ENCODE measurements at regions of chr16 and their contacts with region 1.

Region 1: GRCh38 chr16:28617874-28618273 is 8.0 kb upstream of the SULT1A1 start:
- DNase-seq: no peak
- ATAC-seq: no peak
- H3K4me3 ChIP-seq: no peak overlapping the region
- H3K27ac ChIP-seq: no peak overlapping the region
- H3K4me1 ChIP-seq: peaks cover 0 to 18% (median 0%) of the 10 kb centered on the region in 9 donors
- H3K27me3 ChIP-seq: no peaks in the 10 kb centered on the region
- CTCF ChIP-seq: no peak

Region 2: GRCh38 chr16:28277537-28278388 is 340.1 kb before region 1 on chr16:
- intact Hi-C with region 1: loop called in 1 of 10 experiments (anchors 5 kb)
- DNase-seq: peak; percentile 80 to 84
- ATAC-seq: peak; percentile 85 to 94 (median 90)
- H3K4me3 ChIP-seq: peak overlapping the region; percentile 5 to 50 (median 36)
- H3K27ac ChIP-seq: peak overlapping the region in 1 of 10 donors; percentile 22
- H3K4me1 ChIP-seq: peaks cover 0 to 23% (median 9%) of the 10 kb centered on the region in 9 donors
- H3K27me3 ChIP-seq: peaks cover 0 to 14% (median 8%) of the 10 kb centered on the region in 7 donors
- CTCF ChIP-seq: peak; percentile 89 to 99 (median 98)

Region 3: GRCh38 chr16:28491970-28492474 is 125.9 kb before region 1 on chr16 and contains the start of gene CLN3:
- intact Hi-C with region 1: loop called in 3 of 10 experiments (anchors 5 kb)
- DNase-seq: peak; percentile 87 to 94
- ATAC-seq: peak; percentile 96 to 99 (median 98)
- H3K4me3 ChIP-seq: peak within 1 kb of the TSS; percentile 63 to 100 (median 94)
- H3K27ac ChIP-seq: peak within 1 kb of the TSS; percentile 91 to 99 (median 96)
- H3K4me1 ChIP-seq: peaks cover 0 to 48% (median 14%) of the 10 kb centered on the region in 9 donors
- H3K27me3 ChIP-seq: peaks cover 0 to 3% (median 0%) of the 10 kb centered on the region in 7 donors
- CTCF ChIP-seq: no peak
- total RNA-seq, gene CLN3: 6.5 to 17.6 (median 10.8) TPM

Region 4: GRCh38 chr16:28538733-28539596 is 78.9 kb before region 1 on chr16 and contains the start of gene NUPR1:
- intact Hi-C with region 1: loop called in 1 of 10 experiments (anchors 5 kb)
- DNase-seq: peak; percentile 88 to 97
- ATAC-seq: peak; percentile 97 to 99 (median 98)
- H3K4me3 ChIP-seq: peak within 1 kb of the TSS; percentile 34 to 67 (median 52)
- H3K27ac ChIP-seq: peak within 1 kb of the TSS; percentile 86 to 97 (median 90)
- H3K4me1 ChIP-seq: peaks cover 3 to 55% (median 22%) of the 10 kb centered on the region in 9 donors
- H3K27me3 ChIP-seq: no peaks in the 10 kb centered on the region
- CTCF ChIP-seq: no peak
- total RNA-seq, gene NUPR1: 16.7 to 58.1 (median 27.9) TPM

Region 5: DNA sequence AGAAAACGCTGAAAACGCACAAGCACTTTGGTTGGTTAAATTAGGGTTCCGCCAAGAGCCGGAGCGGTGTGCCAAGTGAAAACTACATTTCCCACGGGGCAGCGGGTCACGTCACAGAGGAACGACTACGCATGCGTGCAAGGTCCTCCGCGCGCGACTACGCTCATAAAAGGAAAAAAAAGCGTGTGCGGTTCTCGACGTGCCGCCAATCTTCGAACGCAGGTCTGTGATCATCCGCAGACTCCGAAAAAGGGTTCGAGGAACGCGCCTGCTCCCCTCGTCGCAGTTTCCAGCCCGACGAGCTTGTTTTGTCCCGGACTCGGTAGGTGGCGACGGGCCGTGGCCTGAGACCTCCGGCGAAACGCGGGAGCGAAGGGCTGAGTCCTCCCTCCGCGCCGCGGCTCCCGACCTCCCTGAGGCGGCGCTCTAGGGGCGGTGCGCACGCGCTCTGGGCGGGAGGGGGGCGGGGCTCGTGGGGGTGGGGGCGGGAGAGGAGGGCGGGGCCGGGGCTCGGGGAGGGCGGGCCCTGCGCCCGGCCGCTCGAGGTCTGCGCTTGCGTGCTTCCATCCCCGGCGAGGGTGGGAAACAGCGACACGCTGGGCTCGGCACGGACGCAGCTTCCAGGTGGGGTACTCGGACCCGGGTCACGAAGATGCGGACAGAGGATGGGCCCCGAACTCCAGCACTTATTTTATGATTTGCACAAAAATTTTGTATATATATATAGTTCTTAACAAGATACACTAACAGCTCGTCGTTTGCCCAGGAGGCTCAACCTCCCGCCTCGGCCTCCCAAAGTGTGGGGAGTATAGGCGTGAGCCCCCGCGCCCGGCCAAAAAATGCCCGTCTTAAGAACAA is 63.9 kb before region 1 on chr16 and contains the start of gene SGF29:
- intact Hi-C with region 1: loop called in 1 of 10 experiments (anchors 5 kb)
- DNase-seq: peak; percentile 92 to 95
- ATAC-seq: peak; percentile 96 to 98 (median 96)
- H3K4me3 ChIP-seq: peak within 1 kb of the TSS; percentile 14 to 86 (median 67)
- H3K27ac ChIP-seq: peak within 1 kb of the TSS; percentile 93 to 98 (median 98)
- H3K4me1 ChIP-seq: peaks cover 4 to 32% (median 11%) of the 10 kb centered on the region in 9 donors
- H3K27me3 ChIP-seq: no peaks in the 10 kb centered on the region
- CTCF ChIP-seq: peak in 8 of 9 donors; percentile 21 to 70 (median 38)
- total RNA-seq, gene SGF29: 11.1 to 20.9 (median 13.6) TPM

Region 6: DNA sequence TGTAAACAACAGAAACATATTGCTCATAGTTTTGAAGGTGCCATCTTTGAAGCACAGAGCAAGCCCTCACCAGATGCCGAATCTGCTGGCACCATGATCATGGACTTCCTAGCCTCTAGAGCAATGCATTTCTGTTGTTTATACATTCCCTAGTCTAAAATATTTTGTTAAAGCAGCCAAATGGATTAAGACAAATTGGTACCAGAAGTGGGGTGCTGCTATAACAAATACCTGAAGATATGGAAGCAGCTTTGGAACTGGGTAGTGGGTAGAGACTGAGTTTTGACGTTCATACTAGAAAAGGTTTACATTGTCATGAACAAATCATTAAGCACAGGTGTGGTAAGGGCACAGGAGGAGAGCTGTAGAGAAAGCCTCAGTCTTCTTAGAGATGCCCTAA is 50.6 kb before region 1 on chr16:
- intact Hi-C with region 1: no loop called
- DNase-seq: no peak
- ATAC-seq: no peak
- H3K4me3 ChIP-seq: no peak overlapping the region
- H3K27ac ChIP-seq: no peak overlapping the region
- H3K4me1 ChIP-seq: peaks cover under 1 to 10% (median 5%) of the 10 kb centered on the region in 9 donors
- H3K27me3 ChIP-seq: no peaks in the 10 kb centered on the region
- CTCF ChIP-seq: no peak

Region 7: DNA sequence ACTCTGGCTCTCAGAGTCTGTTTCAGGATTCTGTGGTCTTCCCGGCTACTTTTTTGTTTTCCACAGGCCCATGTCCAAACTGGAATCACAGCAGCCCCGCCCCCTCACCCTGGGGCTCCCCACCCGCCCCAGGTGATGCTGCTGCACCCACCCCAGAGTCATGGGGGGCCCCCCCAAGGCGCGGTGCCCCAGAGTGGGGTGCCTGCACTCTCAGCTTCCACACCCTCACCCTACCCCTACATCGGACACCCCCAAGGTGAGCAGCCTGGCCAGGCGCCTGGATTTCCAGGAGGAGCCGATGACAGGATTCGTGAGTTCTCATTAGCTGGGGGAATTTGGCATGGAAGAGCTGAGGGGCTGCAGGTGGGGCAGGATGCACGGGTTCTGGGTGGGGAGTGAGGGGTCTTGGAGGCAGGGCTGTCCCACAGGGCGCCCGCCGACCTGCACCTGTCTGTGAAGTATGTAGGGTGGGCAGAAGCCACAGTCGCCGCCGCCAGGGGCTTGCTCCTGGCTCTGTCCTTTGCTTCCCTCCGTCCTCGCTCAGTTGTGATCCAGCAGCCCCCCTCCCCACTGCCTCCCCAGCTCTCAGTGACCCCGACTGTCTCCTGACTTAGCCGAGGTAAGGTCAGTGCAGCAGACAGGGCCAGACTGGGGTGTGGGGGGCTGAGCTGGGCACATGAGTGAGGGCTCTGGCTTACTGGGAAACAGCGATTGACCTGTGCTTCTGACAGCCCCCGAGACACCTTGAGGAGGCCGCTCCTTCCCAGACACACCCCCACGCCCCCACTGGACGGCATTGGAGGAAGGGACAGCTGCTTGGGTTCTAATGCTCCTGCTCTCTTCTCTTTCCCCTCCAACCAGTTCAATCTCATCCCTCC is 218.2 kb after region 1 on chr16:
- intact Hi-C with region 1: no loop called
- DNase-seq: no peak
- ATAC-seq: peak in 3 of 8 donors; percentile 15 to 28 (median 19)
- H3K4me3 ChIP-seq: no peak overlapping the region
- H3K27ac ChIP-seq: no peak overlapping the region
- H3K4me1 ChIP-seq: no peaks in the 10 kb centered on the region
- H3K27me3 ChIP-seq: no peaks in the 10 kb centered on the region
- CTCF ChIP-seq: no peak

Measured in heart right ventricle (tissue), 16 donors.